Calu3 (cell line): ENCODE measurements at regions of chr1 and their contacts with region 1.

Region 1: DNA sequence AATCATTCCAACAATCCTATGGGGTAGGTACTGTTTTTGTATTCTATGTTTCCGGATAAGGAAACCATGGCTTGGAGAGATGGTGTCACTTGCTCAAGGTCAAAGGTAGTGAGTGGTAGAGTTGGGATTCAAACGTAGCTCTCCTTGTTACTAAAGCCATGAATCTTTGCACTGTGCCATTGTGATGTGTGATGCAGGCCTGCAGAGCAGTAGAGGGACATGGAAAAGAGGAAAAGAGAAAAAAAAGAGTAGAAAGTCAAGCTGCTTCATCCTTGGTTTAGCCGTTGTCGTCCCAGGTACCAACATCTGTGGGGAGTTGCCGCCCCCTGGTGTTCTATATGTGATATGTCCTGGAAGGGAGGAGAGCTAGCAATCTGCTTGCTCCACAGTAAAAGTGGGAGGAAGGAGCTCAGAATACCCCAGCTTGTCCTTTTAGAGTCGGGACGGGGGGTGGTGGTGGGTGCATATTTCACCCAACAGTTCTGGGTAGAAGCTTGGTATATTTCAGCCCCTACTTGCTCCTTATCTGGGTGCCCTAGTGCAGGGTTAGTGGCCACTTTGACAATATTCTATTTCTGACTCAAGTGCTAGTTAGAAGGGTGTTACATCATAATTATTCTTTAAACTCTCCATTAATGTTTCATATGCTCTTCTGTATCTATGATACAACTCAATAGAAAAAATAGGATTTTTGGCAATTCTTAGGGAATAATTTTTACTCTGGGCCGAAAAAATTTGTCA is 98.4 kb downstream of the EBNA1BP2 start:
- DNase-seq: peak; percentile 79
- H3K4me3 Mint-ChIP-seq: no peak overlapping the region
- H3K27ac Mint-ChIP-seq: no peak overlapping the region
- H3K4me1 Mint-ChIP-seq: peaks cover 18% of the 10 kb centered on the region
- H3K27me3 Mint-ChIP-seq: no peaks in the 10 kb centered on the region
- CTCF ChIP-seq: peak; percentile 86

Region 2: GRCh38 chr1:42567043-42567442 is 506.6 kb before region 1 on chr1:
- CTCF ChIA-PET with region 1: no interaction called
- intact Hi-C with region 1: no loop called
- DNase-seq: no peak
- H3K4me3 Mint-ChIP-seq: no peak overlapping the region
- H3K27ac Mint-ChIP-seq: no peak overlapping the region
- H3K4me1 Mint-ChIP-seq: no peaks in the 10 kb centered on the region
- H3K27me3 Mint-ChIP-seq: no peaks in the 10 kb centered on the region
- CTCF ChIP-seq: no peak

Region 3: DNA sequence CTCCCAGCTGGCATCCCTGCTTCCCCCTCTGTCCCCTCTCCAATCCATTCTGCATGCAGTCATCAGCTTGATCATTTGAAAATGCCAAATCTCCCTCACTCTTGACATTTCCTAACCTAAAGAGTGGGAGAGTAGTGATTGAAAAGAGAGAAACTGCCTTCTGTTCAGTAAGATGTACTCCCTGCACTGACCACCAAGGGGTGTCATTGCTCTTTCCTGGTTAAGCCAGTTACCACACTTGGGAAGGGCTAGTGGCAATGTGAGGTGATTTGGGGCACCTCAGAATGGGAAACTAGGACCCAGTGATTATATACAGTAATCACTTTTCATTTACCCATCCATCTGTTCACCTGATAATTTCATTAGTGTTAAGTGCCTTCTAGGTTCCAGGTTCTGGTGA is 295.8 kb before region 1 on chr1:
- CTCF ChIA-PET with region 1: interaction called, 12 read pairs
- intact Hi-C with region 1: no loop called
- DNase-seq: peak; percentile 34
- H3K4me3 Mint-ChIP-seq: no peak overlapping the region
- H3K27ac Mint-ChIP-seq: no peak overlapping the region
- H3K4me1 Mint-ChIP-seq: no peaks in the 10 kb centered on the region
- H3K27me3 Mint-ChIP-seq: no peaks in the 10 kb centered on the region
- CTCF ChIP-seq: peak; percentile 71

Region 4: GRCh38 chr1:42913426-42914091 is 160.1 kb before region 1 on chr1:
- CTCF ChIA-PET with region 1: interaction called, 224 read pairs
- intact Hi-C with region 1: loop called (anchors 1 kb)
- DNase-seq: peak; percentile 74
- H3K4me3 Mint-ChIP-seq: no peak overlapping the region
- H3K27ac Mint-ChIP-seq: no peak overlapping the region
- H3K4me1 Mint-ChIP-seq: peaks cover 13% of the 10 kb centered on the region
- H3K27me3 Mint-ChIP-seq: no peaks in the 10 kb centered on the region
- CTCF ChIP-seq: peak; percentile 81

Region 5: GRCh38 chr1:42924082-42924850 is 149.4 kb before region 1 on chr1:
- CTCF ChIA-PET with region 1: interaction called, 56 read pairs
- intact Hi-C with region 1: no loop called
- DNase-seq: peak; percentile 96
- H3K4me3 Mint-ChIP-seq: peak overlapping the region; percentile 61
- H3K27ac Mint-ChIP-seq: peak overlapping the region; percentile 82
- H3K4me1 Mint-ChIP-seq: peaks cover 29% of the 10 kb centered on the region
- H3K27me3 Mint-ChIP-seq: no peaks in the 10 kb centered on the region
- CTCF ChIP-seq: no peak

Region 6: DNA sequence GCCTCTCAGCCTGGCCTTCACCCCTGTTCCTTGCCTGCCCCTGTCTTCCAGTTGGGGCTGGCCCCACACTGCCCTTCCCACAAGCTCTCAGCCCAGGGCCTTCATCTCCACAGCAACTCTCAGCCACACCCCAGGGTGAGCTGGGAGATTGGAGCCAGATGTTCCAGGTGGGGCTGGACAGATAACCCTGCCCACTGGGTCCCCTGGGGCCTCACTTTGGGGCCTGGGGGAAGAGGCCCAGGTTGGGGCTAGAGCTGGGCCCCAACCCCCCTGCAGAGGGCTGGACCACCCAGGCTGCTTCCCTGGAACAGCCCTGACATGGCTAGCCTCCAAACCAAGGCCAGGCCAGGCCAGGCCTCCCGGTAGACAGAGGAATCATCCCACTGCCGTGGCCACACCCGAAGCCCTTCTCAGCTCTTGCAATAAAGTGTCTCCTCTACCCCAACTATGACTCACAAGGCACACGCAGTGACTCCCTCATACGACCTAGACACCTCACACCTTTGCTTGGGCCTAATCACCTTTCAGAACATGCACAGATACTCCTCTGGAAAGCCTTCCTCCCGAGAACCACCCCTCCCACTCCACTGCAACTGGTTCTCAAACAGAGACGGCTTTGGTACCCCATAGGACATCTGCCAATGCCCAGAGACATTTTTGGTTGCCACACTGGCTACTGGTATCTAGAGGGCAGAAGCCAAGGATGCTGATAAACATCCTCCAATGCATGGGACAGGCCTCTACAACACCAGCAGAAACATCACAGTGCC is 137.2 kb before region 1 on chr1:
- CTCF ChIA-PET with region 1: interaction called, 14 read pairs
- intact Hi-C with region 1: no loop called
- DNase-seq: peak; percentile 35
- H3K4me3 Mint-ChIP-seq: peak overlapping the region; percentile 50
- H3K27ac Mint-ChIP-seq: peak overlapping the region; percentile 87
- H3K4me1 Mint-ChIP-seq: peaks cover 90% of the 10 kb centered on the region
- H3K27me3 Mint-ChIP-seq: no peaks in the 10 kb centered on the region
- CTCF ChIP-seq: no peak